GM13977 (cell line): ENCODE measurements at regions of chr6 and their contacts with region 1.

Region 1: GRCh38 chr6:14066782-14067406 is 50.7 kb upstream of the CD83 start:
- DNase-seq: peak; percentile 64
- CTCF ChIP-seq: peak; percentile 57

Region 2: DNA sequence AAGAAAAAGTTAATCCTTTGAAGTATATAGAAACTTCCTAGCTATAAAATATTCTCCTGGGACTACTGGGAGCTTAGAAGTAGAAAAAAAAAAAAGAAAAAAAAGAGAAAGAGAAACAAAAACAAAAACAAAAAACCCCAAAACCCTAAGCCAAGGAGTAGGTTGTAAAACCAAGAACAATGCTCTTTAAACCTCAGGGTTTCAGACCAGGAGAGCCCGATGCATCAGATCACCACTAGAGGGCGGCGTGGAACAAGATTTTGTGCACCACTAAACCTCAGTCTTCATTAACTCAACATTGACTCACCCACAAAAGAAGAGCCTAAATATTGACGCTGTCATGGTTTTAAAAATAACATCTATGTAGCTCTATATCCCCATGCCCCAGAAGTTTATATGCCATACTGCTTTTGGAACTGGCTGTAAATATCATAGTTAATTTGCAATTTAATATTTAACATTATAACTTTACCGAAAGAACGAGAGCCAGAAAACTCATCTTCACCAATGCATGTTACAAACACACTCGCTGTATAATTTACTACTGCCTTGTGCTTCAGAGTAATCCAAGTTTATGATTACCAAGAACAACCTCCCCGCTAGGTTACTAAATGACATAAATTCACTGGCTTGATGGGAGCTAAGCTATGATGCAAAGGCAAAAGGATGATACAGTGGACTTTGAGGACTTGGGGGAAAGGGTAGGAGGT is 271.7 kb before region 1 on chr6:
- in situ Hi-C with region 1: loop called (anchors 25 kb)
- DNase-seq: peak; percentile 75
- CTCF ChIP-seq: peak; percentile 88

Region 3: DNA sequence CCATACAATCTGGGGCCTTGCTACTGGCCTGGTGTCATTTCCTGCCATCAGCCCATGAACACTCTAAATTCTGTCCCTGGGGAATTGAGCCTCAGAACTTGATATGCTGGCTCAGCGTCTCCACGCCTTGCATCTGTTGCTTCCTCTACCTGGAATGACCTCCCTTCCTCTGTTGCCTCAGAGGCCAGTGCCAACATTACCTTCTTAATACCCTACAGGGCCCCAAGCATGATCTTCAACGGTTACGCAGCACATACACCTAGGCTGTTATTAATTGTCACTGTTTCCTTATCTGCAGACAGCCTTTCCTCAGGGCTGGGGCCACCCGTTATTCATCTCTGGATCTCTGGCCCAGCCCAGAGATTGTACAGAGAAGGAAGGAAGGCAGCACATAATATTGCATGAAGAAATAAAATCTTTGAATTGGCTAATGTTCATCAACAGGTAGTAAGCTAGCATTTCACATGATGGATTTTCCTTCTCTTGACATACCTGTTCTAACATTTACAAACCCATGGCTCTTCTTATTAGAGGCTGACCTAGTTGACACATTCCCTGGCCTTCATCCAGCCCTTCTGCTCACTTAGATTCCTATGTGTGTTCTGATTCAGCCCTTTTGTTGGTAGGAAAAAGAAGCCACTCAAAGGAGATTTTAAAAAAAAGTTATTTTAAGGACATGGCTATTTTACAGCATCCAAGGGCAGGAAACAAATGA is 150.5 kb before region 1 on chr6:
- in situ Hi-C with region 1: loop called (anchors 10 kb)
- DNase-seq: no peak
- CTCF ChIP-seq: no peak

Region 4: DNA sequence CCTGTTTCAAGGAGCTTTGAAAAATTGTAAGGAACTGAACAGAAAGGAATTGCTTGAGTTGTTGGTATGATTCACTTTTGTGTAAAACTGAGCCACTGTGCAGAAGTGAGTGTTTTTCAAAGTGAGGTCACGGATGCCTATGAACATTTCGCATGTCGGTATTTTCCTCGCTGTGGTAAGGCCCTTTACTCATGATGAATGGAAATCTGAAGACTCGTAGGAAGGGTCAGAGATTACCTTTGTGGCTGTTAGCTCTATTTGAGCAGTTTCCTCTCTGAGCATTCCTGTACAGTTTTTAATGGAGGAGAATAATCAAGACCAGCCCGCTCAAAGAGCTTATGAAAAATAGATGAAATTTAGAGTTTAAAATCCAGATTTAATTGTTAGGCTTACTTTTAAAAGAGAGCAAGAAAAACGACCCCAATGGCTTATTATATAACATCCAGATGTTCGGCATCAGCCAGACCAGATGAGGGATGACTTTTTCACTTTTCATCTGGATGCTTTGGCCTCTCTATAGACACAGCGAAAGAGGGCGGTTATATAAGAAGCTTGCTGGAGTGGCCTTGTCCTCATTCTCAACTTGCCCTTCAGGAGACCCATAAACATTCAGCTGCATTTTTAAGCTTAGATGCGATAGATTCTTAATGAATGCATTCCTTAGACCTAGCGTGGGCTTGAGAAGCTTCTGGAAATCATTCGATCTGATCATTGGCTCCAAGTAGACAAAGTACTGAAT is 150.2 kb after region 1 on chr6:
- in situ Hi-C with region 1: no loop called
- DNase-seq: no peak
- CTCF ChIP-seq: no peak

Region 5: DNA sequence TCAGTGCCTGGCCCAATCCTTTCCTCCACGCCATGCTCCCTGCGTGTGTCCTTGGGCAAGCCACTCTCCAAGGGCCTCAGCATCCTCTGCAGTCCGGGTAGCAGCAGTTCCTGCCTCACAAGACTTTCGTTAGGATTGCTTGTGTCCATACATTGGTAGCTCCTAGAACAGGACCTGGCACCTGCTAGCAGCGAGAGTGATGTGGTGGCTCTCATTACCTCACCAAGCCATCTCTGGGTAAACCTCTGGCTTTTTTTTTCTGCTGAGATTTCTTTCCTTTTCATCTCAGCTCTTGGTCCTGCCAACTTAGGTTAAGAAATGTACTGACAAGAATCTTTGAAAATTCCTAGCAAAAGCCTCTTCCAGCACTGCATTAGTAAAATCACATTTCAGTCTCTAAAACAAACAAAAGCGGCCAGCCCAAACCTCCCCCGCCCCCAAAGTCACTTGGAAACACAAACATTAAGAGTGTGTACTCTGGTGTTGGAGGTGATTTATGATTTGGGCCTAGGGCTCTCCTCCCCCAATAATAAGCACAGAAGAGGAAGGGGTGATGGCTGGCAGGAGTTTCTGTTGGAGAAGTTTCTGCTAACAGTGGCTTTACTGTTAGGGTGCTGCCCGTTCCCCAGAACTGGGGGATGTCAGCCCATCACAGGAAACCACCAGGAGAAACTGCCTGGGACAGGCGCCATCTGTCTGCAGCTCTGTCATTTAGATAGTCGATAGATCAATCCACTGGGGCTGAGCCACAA is 249.9 kb after region 1 on chr6:
- in situ Hi-C with region 1: no loop called
- DNase-seq: peak; percentile 37
- CTCF ChIP-seq: peak; percentile 46

Region 6: DNA sequence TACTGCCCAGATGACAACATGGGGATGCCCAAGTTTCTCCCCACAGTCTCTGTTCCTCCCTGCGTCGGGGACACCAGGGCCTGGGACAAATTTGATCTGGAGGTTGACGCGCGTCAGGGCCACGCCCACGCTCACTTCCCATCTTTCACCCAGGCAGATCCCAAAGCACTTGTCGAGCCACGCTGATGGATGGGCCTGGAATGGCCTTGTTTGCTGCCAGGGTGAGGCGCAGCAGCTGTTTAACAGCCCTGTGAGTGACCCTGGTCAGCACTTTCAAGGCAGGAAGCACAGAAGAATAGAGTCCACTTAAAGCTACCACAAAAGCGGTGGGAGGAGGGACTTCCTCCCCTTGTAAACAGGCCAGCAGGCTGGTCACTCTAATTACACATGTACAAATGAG is 854.3 kb after region 1 on chr6:
- in situ Hi-C with region 1: no loop called
- DNase-seq: no peak
- CTCF ChIP-seq: no peak